ENCODE measurements at regions of chr16 and their contacts with region 1.

Region 1: DNA sequence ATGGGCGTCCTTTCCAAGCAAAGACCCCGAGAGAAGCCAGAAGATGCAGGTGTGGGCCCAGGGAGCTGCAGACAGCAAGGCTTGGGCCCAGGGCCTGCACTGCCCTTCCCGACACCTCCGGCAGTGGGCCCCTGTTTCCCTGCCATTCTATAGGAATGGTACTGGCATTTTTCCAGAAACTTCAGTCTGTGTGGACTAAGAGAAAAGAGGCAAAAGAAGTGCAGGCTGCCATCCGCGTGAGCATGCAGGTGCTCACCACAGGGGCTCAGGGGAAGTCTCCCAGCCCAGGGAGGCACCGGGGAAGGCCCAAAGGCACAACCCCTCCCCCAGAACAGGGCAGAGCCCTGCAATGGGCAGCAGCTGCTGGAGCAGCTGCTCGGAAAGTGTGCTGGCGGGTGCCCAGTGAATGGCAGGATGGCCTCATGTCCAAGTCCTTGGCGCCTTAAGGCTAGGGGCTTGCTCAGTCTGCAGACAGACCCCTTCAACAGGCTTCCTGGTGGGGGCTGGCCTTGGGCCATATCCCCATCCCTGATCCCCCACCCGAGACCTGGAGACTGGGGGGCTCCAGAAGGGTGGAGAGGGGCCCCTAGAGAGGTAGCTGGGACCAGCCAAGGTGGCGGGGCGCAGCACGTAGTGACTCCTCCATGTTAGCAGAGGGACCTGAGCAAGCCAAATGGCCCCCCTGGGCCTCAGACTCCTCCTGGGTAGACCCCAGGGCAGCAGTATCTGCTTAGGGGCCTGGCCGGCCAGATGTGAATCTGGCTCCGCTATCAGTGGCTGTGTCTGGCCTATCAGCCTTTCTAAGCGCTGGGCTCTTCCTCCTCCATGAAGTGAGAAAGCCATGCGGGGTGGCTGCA is 6.7 kb upstream of the TPPP3 start:
- DNase-seq: peak in 3 of 6 donors; percentile 21 to 66 (median 27)
- ATAC-seq: no peak
- H3K4me3 ChIP-seq: no peak overlapping the region
- H3K27ac ChIP-seq: no peak overlapping the region
- H3K4me1 ChIP-seq: peaks cover 24 to 34% (median 31%) of the 10 kb centered on the region in 3 donors
- H3K27me3 ChIP-seq: no peaks in the 10 kb centered on the region
- CTCF ChIP-seq: peak in 1 of 4 donors; percentile 5

Region 2: DNA sequence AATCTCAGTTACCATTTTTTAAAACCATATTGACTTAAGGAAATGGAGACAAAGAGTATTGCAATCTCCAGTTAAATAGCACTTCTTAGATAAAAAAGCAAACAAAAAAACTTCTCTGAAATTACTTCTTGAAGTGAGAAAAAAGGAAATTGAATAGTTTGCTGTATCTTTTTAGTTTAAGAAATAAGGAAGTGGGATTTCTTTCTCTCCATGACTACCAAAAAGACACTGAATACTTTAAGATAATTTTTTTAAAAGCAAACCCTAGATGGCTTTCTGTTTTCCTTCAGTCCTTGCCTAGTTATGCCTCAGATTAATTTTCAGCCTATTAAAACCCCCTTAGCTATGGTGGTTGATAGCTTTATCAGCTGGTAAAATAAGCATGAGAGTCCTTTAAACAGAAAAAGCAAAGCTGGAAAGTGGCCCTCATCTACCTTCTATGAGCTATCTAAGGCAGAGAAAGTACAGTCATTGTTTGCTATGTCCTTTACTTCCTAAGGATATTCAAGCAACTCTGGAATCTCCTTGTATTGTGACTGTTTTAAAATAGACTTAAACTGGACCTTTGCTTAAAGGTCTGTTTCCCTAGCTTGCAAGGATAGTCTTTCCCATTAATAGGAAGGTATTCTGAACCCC is 35.3 kb before region 1 on chr16:
- intact Hi-C with region 1: loop called in 1 of 3 experiments (anchors 5 kb)
- DNase-seq: no peak
- ATAC-seq: peak in 1 of 4 donors; percentile 14
- H3K4me3 ChIP-seq: no peak overlapping the region
- H3K27ac ChIP-seq: peak overlapping the region in 3 of 4 donors; percentile 30 to 83 (median 76)
- H3K4me1 ChIP-seq: peaks cover 6 to 31% (median 24%) of the 10 kb centered on the region in 3 donors
- H3K27me3 ChIP-seq: no peaks in the 10 kb centered on the region
- CTCF ChIP-seq: no peak

Measured in pancreas (tissue), 10 donors.